Stomach (tissue), 19 donors: ENCODE measurements at regions of chr11 and their contacts with region 1.

Region 1: GRCh38 chr11:67492801-67493547 is 10.1 kb downstream of the AIP start:
- DNase-seq: no peak
- H3K4me3 ChIP-seq: no peak overlapping the region
- H3K27ac ChIP-seq: no peak overlapping the region
- H3K4me1 ChIP-seq: no peaks in the 10 kb centered on the region
- H3K27me3 ChIP-seq: no peaks in the 10 kb centered on the region
- CTCF ChIP-seq: no peak
- EP300 ChIP-seq: no peak
- POLR2A ChIP-seq: no peak

Region 2: DNA sequence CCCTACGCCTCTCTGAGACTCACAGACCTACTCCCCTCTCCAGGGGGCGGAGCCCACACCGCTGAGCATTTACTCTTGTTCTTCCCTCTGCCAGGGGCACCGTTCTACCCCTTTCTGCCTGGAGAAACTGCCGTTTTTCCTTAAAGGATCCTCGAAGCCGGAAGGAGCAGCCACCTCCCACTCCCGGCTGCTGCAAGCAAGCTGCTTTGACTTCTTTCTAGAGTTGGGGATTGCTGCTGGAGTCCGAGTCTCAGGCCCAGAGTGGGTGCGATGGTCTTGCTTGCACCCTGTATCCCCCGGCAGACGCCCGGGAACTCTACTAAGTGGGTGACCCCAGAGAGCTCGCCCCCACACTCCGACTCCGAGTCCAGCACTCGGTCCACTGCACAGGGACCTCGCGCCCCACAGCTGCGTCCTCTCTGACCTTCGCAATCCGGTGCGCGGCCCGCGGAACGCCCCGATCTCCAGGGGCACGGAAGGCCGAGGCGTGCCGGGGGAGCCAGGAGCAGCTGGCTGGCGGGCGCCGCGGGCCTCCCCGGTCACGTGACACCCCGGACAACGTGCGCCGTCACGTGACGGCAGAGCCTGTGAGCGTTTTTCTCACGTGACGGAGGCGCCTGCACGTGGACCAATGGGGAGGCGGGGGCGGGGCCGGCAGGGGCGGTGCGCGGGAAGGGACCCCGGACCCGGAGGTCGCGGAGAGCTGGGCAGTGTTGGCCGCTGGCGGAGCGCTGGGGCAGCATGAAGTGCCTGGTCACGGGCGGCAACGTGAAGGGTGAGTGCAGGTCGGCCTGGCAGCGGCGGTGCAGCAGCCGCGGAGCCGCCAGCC is 101.5 kb before region 1 on chr11 and contains the start of gene RAD9A:
- intact Hi-C with region 1: loop called (anchors 10 kb)
- DNase-seq: peak; percentile 97 to 98
- H3K4me3 ChIP-seq: peak within 1 kb of the TSS; percentile 67 to 96 (median 92)
- H3K27ac ChIP-seq: peak within 1 kb of the TSS; percentile 83 to 90 (median 84)
- H3K4me1 ChIP-seq: peaks cover 14 to 46% (median 35%) of the 10 kb centered on the region in 4 donors
- H3K27me3 ChIP-seq: no peaks in the 10 kb centered on the region
- CTCF ChIP-seq: peak in 1 of 7 experiments; percentile 8
- EP300 ChIP-seq: no peak
- POLR2A ChIP-seq: no peak
- total RNA-seq, gene RAD9A: 7.0 to 88.9 (median 29.5) TPM